Dorsolateral prefrontal cortex (tissue), 120 donors: ENCODE measurements at regions of chr1 and their contacts with region 1.

Region 1: GRCh38 chr1:176559878-176560277 is 96.9 kb downstream of the PAPPA2 start:
- DNase-seq: peak in 6 of 10 donors; percentile 10 to 62 (median 42)
- H3K4me3 ChIP-seq: no peak overlapping the region
- H3K27ac ChIP-seq: no peak overlapping the region
- H3K27me3 ChIP-seq: peaks cover 0 to 13% (median 0%) of the 10 kb centered on the region in 45 donors
- CTCF ChIP-seq: peak; percentile 71 to 96 (median 88)

Region 2: GRCh38 chr1:176374967-176375569 is 184.8 kb before region 1 on chr1:
- intact Hi-C with region 1: loop called in 1 of 2 experiments (anchors 10 kb)
- DNase-seq: peak; percentile 58 to 86 (median 70)
- H3K4me3 ChIP-seq: no peak overlapping the region
- H3K27ac ChIP-seq: no peak overlapping the region
- H3K27me3 ChIP-seq: no peaks in the 10 kb centered on the region
- CTCF ChIP-seq: peak; percentile 64 to 93 (median 86)

Region 3: DNA sequence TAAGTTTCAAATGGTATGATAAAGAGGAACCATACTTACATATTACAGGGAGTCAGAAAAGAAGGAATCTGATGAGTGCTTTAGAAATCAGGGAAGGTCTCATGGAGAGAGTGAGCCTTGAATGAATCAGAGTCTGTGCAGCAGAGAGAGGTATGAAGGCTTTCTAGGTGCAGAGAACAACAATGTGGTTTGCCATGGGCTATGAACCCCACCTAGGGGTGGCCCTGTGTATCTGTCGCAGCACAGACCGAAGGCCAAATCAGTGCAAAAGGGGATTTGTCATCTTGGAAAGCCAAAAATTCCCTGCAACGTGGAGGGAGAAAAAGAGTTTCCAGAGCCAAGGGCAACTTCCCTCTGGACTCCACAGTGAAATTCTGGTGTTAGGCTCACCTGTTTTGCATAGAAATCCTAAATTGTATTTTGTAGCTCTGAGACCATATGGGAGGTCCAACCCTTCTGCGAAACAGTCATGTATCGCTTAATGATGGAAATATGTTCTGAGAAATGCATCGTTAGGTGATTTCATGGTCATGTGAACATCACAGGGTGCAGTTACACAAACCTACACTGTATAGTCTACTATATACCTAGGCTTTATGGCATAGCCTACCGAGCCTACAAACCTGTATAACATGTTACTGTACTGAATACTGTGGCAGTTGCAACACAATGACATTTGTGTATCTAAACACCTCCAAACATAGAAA is 93.2 kb before region 1 on chr1:
- intact Hi-C with region 1: no loop called
- DNase-seq: no peak
- H3K4me3 ChIP-seq: no peak overlapping the region
- H3K27ac ChIP-seq: no peak overlapping the region
- H3K27me3 ChIP-seq: no peaks in the 10 kb centered on the region
- CTCF ChIP-seq: peak in 5 of 56 donors; percentile 9 to 37 (median 18)

Region 4: DNA sequence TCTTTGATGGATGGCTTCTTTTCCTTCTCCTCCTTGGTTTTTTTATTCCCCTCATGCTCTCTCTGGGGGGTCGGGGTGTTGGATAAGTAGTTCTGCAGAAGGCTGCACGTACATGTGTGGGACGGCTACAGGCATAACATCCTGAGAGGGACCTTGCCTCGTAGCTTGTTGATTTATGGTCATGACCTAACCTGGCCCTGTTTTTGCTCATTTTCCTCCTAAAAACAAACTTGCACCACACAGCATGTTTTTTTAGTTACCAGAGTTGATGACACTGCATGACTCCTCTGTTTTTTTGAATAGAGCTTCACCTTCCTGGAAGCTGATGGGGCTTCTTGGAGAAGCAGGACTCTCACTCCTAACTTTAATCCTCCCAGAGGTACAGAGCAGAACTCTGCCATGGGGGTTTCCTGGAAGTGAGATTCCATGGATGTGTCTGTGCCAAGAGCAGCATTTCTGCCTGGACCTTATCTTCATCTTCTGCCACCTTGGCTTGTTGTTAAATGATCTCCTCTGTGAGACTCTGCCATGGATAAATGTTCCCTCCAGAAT is 17.8 kb after region 1 on chr1:
- intact Hi-C with region 1: no loop called
- DNase-seq: no peak
- H3K4me3 ChIP-seq: no peak overlapping the region
- H3K27ac ChIP-seq: no peak overlapping the region
- H3K27me3 ChIP-seq: no peaks in the 10 kb centered on the region
- CTCF ChIP-seq: no peak

Region 5: DNA sequence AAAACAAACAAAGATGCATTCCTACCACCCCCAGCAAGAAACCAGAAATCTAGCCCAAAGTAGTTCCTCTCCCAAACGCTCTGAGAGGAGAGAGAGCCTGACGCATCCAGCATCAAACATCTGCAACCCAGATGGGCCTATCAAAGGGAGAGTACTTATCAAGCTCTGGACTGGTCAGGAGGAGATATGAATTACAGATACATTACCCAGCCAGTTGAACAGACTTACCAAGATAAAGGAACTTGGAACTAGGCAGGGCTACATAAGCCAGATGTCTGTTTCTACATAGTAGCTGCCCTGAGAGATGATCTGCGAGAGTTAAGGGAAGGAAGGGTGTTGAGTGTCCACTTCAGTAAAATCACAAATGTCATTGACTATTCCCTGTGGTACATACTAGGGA is 41.5 kb after region 1 on chr1:
- intact Hi-C with region 1: no loop called
- DNase-seq: no peak
- H3K4me3 ChIP-seq: no peak overlapping the region
- H3K27ac ChIP-seq: no peak overlapping the region
- H3K27me3 ChIP-seq: no peaks in the 10 kb centered on the region
- CTCF ChIP-seq: no peak

Region 6: GRCh38 chr1:176691251-176692228 is 131.7 kb after region 1 on chr1:
- intact Hi-C with region 1: loop called (anchors 2 to 5 kb)
- DNase-seq: peak in 1 of 10 donors; percentile 34
- H3K4me3 ChIP-seq: no peak overlapping the region
- H3K27ac ChIP-seq: no peak overlapping the region
- H3K27me3 ChIP-seq: no peaks in the 10 kb centered on the region
- CTCF ChIP-seq: peak; percentile 43 to 80 (median 69)

Region 7: GRCh38 chr1:176843352-176844297 is 283.7 kb after region 1 on chr1:
- intact Hi-C with region 1: loop called (anchors 1 to 5 kb)
- DNase-seq: peak in 1 of 10 donors; percentile 27
- H3K4me3 ChIP-seq: no peak overlapping the region
- H3K27ac ChIP-seq: no peak overlapping the region
- H3K27me3 ChIP-seq: no peaks in the 10 kb centered on the region
- CTCF ChIP-seq: peak; percentile 36 to 87 (median 66)

Region 8: DNA sequence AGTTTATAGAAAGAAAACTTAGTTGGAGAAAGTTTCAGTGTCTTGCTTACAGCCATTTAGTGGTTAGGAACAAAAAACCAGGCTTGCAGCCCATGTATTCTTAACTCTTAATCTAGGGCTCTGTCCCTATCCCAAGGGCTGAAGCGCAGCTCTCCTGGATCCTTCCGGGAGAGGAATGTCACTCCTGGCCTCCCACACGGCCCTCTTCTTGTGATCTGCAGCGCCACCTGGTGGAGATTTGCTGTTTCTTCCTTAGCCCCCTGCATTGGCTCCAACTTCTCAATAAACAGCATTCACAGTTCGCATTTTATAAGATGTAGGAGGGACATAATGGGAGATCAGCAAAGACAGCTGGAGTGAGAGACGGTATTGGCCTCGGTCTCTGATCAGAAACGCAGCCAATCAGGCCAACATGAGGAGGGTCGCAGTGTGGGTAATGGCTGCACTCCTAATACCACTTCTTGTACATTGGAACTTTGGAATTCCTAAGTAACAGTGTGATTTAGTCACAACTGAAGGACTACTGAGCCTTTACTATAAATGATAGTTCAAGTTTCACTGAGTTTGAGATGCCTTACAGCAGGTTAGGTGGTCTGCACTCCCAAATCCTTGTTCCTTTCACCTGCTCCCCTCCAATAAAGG is 321.2 kb after region 1 on chr1:
- intact Hi-C with region 1: loop called (anchors 2 to 5 kb)
- DNase-seq: peak; percentile 44 to 77 (median 68)
- H3K4me3 ChIP-seq: no peak overlapping the region
- H3K27ac ChIP-seq: no peak overlapping the region
- H3K27me3 ChIP-seq: no peaks in the 10 kb centered on the region
- CTCF ChIP-seq: peak; percentile 74 to 94 (median 89)